ENCODE measurements at regions of chr18 and their contacts with region 1.

Region 1: DNA sequence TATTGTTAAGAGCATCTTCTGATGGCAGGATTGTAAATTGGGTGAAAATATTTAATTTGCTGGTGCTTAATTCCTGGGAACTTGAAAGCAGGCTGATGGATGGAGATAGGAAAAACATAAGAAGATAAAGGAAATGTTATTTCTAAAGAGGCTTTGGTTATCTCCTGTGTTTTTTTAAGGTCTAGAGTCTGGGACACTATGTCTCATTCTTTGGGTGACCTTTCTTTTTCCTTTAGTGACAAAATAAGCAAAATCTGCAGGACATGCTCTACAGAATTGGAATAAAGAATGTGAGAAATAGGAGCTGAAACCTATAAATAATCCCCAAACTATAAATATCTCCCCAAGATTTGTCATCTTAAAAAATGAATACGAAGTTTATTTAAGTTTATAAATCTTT is 241.7 kb downstream of the DSC3 start:
- DNase-seq: no peak
- H3K4me3 ChIP-seq: no peak overlapping the region
- H3K27ac ChIP-seq: no peak overlapping the region
- H3K4me1 ChIP-seq: no peaks in the 10 kb centered on the region
- H3K27me3 ChIP-seq: no peaks in the 10 kb centered on the region
- CTCF ChIP-seq: no peak
- EP300 ChIP-seq: no peak
- POLR2A ChIP-seq: no peak

Region 2: GRCh38 chr18:30192216-30192615 is 608.6 kb before region 1 on chr18:
- in situ Hi-C with region 1: no loop called
- intact Hi-C with region 1: no loop called
- DNase-seq: no peak
- H3K4me3 ChIP-seq: no peak overlapping the region
- H3K27ac ChIP-seq: no peak overlapping the region
- H3K4me1 ChIP-seq: no peaks in the 10 kb centered on the region
- H3K27me3 ChIP-seq: no peaks in the 10 kb centered on the region
- CTCF ChIP-seq: no peak
- EP300 ChIP-seq: no peak
- POLR2A ChIP-seq: no peak

Region 3: DNA sequence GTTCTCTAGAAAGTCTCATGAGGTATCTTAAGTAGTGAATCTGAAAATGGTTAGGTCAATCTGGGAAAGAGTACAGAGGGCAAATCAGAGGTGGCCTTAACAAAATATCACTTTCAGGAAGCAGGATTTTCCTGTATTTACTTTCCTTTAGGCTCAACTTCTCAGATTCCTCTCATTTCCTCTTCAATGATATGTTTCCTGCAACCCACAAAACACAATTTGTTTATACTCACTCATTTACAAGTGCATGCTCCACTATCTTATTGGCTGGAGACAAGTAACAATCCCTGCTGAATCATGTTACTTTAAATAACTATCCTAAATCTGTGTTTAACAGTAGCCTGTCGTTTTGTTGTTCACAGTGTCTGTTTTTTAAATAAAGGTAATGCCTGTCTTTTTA is 13.6 kb after region 1 on chr18:
- in situ Hi-C with region 1: no loop called
- intact Hi-C with region 1: loop called (anchors 1 kb)
- DNase-seq: no peak
- H3K4me3 ChIP-seq: no peak overlapping the region
- H3K27ac ChIP-seq: no peak overlapping the region
- H3K4me1 ChIP-seq: no peaks in the 10 kb centered on the region
- H3K27me3 ChIP-seq: no peaks in the 10 kb centered on the region
- CTCF ChIP-seq: no peak
- EP300 ChIP-seq: no peak
- POLR2A ChIP-seq: no peak

Region 4: DNA sequence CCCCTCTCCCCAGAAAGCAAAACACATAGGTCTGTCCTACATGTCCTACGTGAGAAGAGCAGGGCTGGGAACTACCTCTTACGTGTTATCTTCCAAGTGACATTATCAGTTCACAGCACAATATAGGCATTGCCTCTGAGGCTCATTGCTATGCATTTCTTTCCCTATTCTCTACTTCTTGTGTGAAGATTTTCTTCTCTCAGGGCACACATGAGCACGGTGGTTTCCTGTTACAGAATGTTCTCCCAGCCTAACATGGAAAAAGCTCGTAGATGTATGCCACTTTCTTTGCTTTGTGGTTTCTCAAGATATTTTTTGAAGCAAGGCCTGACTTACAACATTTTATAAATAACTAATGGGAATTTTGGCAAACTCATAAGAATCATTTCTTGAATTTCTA is 261.1 kb after region 1 on chr18:
- in situ Hi-C with region 1: no loop called
- intact Hi-C with region 1: no loop called
- DNase-seq: no peak
- H3K4me3 ChIP-seq: no peak overlapping the region
- H3K27ac ChIP-seq: no peak overlapping the region
- H3K4me1 ChIP-seq: no peaks in the 10 kb centered on the region
- H3K27me3 ChIP-seq: no peaks in the 10 kb centered on the region
- CTCF ChIP-seq: no peak
- EP300 ChIP-seq: no peak
- POLR2A ChIP-seq: no peak